ENCODE measurements at regions of chr6 and their contacts with region 1.

Region 1: DNA sequence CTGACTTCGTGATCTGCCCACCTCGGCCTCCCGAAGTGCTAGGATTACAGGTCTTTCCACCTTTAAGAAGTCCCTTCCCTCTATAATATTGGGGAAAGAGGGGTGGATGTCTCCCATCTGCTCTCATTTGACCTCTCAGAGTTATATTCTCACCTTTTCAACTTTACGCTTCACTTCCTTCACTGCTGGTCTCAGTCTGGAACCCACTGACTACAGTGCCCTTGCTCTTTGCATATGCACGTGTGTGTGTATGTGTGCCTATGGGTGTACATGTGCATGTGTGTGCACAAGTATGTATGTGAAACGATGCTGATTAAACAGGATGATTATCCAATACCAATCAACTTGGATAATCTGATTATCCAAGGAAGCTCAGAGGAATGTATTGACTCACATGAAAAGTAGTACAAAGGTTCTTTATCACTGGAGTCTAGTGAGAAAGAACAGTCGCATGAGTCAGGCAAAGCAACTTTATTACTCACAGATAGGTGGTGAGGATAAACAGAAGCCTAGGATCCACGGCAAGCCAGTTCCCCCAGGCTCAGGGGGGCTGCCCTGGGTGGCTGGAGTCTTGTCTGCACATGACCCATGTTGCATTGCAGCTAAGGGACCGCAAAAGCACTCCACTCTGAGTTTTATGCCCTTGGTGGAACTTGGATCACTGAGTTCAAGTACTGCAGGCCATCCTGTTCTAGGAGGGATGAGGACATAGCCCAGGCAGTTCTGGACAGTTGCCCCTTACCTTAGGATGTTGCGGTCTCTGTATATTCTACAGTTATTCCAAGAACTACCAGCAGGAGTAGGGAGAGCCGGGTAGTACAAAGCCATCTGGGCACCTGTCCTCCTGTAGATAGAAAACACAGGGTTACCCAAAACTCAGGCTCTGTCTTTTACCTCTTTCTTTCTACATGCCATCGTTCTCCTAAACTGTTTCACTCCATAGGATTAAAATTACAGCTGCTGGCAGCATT is 50.9 kb downstream of the SNRNP48 start:
- DNase-seq: no peak
- ATAC-seq: peak; percentile 78
- H3K4me3 Mint-ChIP-seq: no peak overlapping the region
- H3K27ac Mint-ChIP-seq: no peak overlapping the region
- H3K4me1 Mint-ChIP-seq: no peaks in the 10 kb centered on the region
- H3K27me3 Mint-ChIP-seq: no peaks in the 10 kb centered on the region
- CTCF ChIP-seq: no peak

Region 2: GRCh38 chr6:7615611-7616383 is 25.1 kb before region 1 on chr6:
- CTCF ChIA-PET with region 1: interaction called, 13 read pairs
- POLR2A ChIA-PET with region 1: no interaction called
- DNase-seq: peak; percentile 35
- ATAC-seq: peak; percentile 76
- H3K4me3 Mint-ChIP-seq: no peak overlapping the region
- H3K27ac Mint-ChIP-seq: peak overlapping the region; percentile 46; the same call in 1 of the 2 replicates
- H3K4me1 Mint-ChIP-seq: peaks cover 5% of the 10 kb centered on the region
- H3K27me3 Mint-ChIP-seq: no peaks in the 10 kb centered on the region
- CTCF ChIP-seq: peak; percentile 51; the same call in 1 of the 2 replicates

Region 3: DNA sequence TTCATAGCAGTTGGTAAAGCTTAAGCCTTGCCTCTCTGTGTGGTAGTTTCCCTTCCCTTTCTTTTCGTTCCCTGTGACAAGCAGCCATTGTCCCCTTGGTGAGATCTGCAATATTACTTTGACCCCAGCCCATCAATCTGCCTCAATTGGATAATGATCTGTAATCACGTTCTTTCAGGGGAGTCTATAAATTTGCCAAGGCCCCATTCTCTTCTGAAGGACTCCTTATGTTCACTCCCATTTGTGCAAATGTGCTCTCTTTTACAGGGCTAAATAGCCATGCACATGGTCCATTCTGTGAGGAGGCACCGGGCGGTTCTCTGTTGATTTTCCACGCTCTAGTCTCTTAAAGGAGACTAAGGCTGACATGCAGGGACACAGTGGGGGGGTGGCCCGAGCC is 1454.8 kb after region 1 on chr6:
- CTCF ChIA-PET with region 1: no interaction called
- POLR2A ChIA-PET with region 1: no interaction called
- DNase-seq: no peak
- ATAC-seq: no peak
- H3K4me3 Mint-ChIP-seq: no peak overlapping the region
- H3K27ac Mint-ChIP-seq: no peak overlapping the region
- H3K4me1 Mint-ChIP-seq: peaks cover 14% of the 10 kb centered on the region
- H3K27me3 Mint-ChIP-seq: no peaks in the 10 kb centered on the region
- CTCF ChIP-seq: no peak